ENCODE measurements at regions of chr6 and their contacts with region 1.

Region 1: GRCh38 chr6:32153564-32154513 is at the start of gene PPT2:
- DNase-seq: peak; percentile 90
- H3K4me3 Mint-ChIP-seq: peak within 1 kb of the TSS; percentile 99
- H3K27ac Mint-ChIP-seq: peak within 1 kb of the TSS; percentile 88
- H3K4me1 Mint-ChIP-seq: peaks cover 46% of the 10 kb centered on the region
- H3K27me3 Mint-ChIP-seq: peaks cover 7% of the 10 kb centered on the region
- total RNA-seq, gene PPT2: 13.2 to 14.8 TPM

Region 2: GRCh38 chr6:31958741-31959739 is 194.8 kb before region 1 on chr6 and contains the starts of genes NELFE and SKIC2:
- CTCF ChIA-PET with region 1: no interaction called
- intact Hi-C with region 1: loop called (anchors 5 kb)
- DNase-seq: peak; percentile 99
- H3K4me3 Mint-ChIP-seq: peak within 1 kb of the TSS; percentile 95
- H3K27ac Mint-ChIP-seq: peak within 1 kb of the TSS; percentile 94
- H3K4me1 Mint-ChIP-seq: peaks cover 41% of the 10 kb centered on the region
- H3K27me3 Mint-ChIP-seq: no peaks in the 10 kb centered on the region
- total RNA-seq, gene NELFE: 83.2 to 87.4 TPM
- total RNA-seq, gene SKIC2: 93.6 to 101 TPM

Region 3: DNA sequence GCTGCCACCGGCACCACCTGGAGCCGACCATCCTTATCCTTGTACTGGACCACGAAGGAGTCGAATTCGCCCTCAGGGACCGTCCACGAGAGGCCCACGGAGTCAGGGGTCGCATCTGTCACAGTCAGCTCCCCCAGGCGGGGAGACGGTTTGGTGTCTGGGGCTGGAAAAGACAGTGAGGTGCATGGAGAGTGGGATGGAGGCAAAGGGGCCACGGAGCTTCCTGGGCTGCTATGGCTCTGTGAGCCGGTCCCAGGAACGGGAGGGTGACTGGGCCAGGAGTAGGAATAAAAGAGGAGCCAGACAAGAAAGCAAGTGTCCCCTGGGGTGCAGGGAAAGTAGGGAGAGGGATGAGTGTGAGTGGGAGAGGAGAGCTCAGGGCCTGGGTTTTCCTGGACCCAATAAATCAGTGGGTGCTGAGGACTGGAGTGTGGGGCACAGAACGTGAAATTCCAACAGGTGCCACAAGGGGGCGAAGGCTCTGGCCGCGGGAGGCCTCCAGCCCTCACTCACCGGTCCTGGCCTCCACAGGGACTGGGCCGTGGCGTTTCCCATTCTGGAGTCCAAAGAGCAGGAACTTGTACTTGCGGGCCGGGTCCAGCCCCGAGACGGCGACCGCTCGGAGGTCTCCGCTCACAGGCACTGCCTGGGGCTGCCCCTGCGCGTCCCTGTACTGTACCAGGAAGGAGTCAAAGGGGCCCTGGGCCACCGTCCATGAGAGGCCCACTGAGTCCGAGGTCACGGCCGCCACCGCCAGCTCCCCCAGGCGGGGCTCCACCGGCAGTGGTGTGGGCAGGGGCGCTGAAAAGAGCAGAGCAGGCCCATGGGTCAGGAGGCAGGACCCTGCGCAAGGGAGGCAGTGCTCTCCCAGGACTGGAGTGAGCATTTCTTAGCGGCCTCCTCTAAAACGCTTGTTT is 105.7 kb before region 1 on chr6:
- CTCF ChIA-PET with region 1: no interaction called
- intact Hi-C with region 1: loop called (anchors 1 kb)
- DNase-seq: peak; percentile 71
- H3K4me3 Mint-ChIP-seq: no peak overlapping the region
- H3K27ac Mint-ChIP-seq: no peak overlapping the region
- H3K4me1 Mint-ChIP-seq: peaks cover 3% of the 10 kb centered on the region
- H3K27me3 Mint-ChIP-seq: no peaks in the 10 kb centered on the region

Region 4: GRCh38 chr6:32087574-32088486 is 66.0 kb before region 1 on chr6:
- CTCF ChIA-PET with region 1: no interaction called
- intact Hi-C with region 1: loop called (anchors 1 kb)
- DNase-seq: peak; percentile 89
- H3K4me3 Mint-ChIP-seq: no peak overlapping the region
- H3K27ac Mint-ChIP-seq: no peak overlapping the region
- H3K4me1 Mint-ChIP-seq: peaks cover 8% of the 10 kb centered on the region
- H3K27me3 Mint-ChIP-seq: peaks cover 17% of the 10 kb centered on the region

Region 5: DNA sequence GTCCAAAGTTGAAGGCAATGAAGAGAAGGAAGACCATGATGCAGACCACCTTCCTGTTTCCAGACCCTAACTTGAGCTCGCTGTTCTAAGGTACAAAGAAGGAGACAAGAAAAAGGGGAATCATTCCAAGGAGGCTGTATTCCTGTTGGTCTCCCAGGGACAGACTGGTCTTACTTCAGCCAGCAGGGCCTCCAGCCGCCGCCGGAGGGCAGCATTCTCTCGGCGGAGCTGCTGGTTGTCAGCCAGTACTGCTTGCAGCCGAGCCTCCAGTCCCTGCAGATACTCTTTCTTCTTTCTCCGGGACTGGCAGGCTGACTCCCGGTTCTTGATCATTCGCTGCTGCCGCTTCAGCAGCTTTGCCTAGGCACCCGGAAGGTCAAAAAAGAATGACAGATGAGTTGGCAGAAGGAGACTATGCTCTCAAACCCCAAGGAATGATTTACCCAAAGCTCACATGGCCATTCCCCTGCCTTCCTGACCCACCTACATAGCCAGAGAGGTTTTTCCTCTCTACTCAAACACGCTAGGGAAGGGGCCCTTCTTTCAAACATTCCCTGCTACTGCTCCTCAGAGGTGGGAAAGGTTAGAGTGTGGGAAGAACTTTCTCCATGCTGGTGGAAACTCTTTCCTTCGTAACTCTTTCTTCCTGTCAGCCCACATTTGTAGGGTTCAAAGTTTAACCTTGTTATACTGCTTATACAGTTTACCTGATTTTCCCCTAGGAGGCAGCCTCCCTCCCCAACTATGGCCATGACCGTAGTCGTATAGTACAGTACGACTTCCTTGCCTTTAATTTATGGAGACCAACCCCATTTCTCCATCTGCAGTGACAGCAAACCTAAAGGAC is 34.8 kb before region 1 on chr6:
- CTCF ChIA-PET with region 1: interaction called, 4 read pairs
- intact Hi-C with region 1: loop called (anchors 1 kb)
- DNase-seq: peak; percentile 82
- H3K4me3 Mint-ChIP-seq: no peak overlapping the region
- H3K27ac Mint-ChIP-seq: peak overlapping the region; percentile 13
- H3K4me1 Mint-ChIP-seq: peaks cover 10% of the 10 kb centered on the region
- H3K27me3 Mint-ChIP-seq: no peaks in the 10 kb centered on the region

Region 6: GRCh38 chr6:32195652-32195901 is 41.7 kb after region 1 on chr6:
- CTCF ChIA-PET with region 1: interaction called, 3 read pairs
- intact Hi-C with region 1: loop called (anchors 1 kb)
- DNase-seq: peak; percentile 100
- H3K4me3 Mint-ChIP-seq: peak overlapping the region; percentile 97
- H3K27ac Mint-ChIP-seq: peak overlapping the region; percentile 95
- H3K4me1 Mint-ChIP-seq: peaks cover 36% of the 10 kb centered on the region
- H3K27me3 Mint-ChIP-seq: no peaks in the 10 kb centered on the region